Endothelial cell of umbilical vein (primary cell): ENCODE measurements at regions of chr5 and their contacts with region 1.

Region 1: GRCh38 chr5:10452768-10453331 is 11.2 kb downstream of the ROPN1L start:
- DNase-seq: peak; percentile 87
- H3K4me3 ChIP-seq: no peak overlapping the region
- H3K27ac ChIP-seq: no peak overlapping the region
- H3K4me1 ChIP-seq: peaks cover 10% of the 10 kb centered on the region
- H3K27me3 ChIP-seq: no peaks in the 10 kb centered on the region
- CTCF ChIP-seq: peak; percentile 56 to 67
- POLR2A ChIP-seq: no peak

Region 2: GRCh38 chr5:9869616-9870288 is 583.1 kb before region 1 on chr5:
- CTCF ChIA-PET with region 1: no interaction called
- POLR2A ChIA-PET with region 1: no interaction called
- dilution Hi-C with region 1: no loop called
- intact Hi-C with region 1: no loop called
- DNase-seq: no peak
- H3K4me3 ChIP-seq: no peak overlapping the region
- H3K27ac ChIP-seq: no peak overlapping the region
- H3K4me1 ChIP-seq: no peaks in the 10 kb centered on the region
- H3K27me3 ChIP-seq: no peaks in the 10 kb centered on the region
- CTCF ChIP-seq: no peak
- POLR2A ChIP-seq: no peak

Region 3: GRCh38 chr5:10552183-10553143 is 99.6 kb after region 1 on chr5:
- CTCF ChIA-PET with region 1: interaction called, 10 read pairs
- POLR2A ChIA-PET with region 1: no interaction called
- dilution Hi-C with region 1: no loop called
- intact Hi-C with region 1: no loop called
- DNase-seq: peak; percentile 44
- H3K4me3 ChIP-seq: no peak overlapping the region
- H3K27ac ChIP-seq: peak overlapping the region; percentile 87
- H3K4me1 ChIP-seq: peaks cover 33% of the 10 kb centered on the region
- H3K27me3 ChIP-seq: no peaks in the 10 kb centered on the region
- CTCF ChIP-seq: no peak
- POLR2A ChIP-seq: no peak

Region 4: DNA sequence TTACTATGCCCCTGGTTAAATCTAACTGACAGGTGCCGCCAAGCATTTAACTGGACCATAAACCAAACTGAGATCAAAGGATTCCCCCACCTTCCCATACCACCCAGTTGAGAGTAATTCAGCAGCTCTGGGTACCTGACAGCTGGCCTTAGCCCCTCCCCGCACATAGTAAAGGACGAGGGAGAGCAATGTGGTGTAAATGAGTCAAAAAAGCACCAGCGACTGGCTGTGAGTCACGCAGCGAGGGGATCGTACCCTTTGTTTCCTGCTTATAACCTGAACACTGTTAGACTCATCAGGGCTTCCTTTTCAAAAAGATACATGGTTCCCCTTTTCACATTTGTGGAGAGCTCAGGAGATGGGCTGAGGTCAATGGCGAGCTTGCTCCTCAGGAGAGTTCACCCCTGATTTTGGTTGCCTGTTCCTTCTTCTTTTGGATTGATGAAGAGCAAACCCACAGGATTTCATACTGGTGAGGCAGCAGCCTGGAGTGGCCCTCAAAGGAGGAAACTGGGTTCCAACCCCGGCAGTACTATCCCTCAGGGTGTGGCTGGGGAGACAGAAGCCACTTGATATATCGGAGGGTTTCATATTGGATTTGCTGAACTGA is 182.5 kb after region 1 on chr5:
- CTCF ChIA-PET with region 1: interaction called, 283 read pairs
- POLR2A ChIA-PET with region 1: no interaction called
- dilution Hi-C with region 1: no loop called
- intact Hi-C with region 1: no loop called
- DNase-seq: peak; percentile 64
- H3K4me3 ChIP-seq: no peak overlapping the region
- H3K27ac ChIP-seq: no peak overlapping the region
- H3K4me1 ChIP-seq: peaks cover 18% of the 10 kb centered on the region
- H3K27me3 ChIP-seq: no peaks in the 10 kb centered on the region
- CTCF ChIP-seq: no peak
- POLR2A ChIP-seq: no peak

Region 5: GRCh38 chr5:10689391-10690081 is 236.7 kb after region 1 on chr5:
- CTCF ChIA-PET with region 1: interaction called, 14 read pairs
- POLR2A ChIA-PET with region 1: no interaction called
- dilution Hi-C with region 1: no loop called
- intact Hi-C with region 1: loop called (anchors 1 kb)
- DNase-seq: peak; percentile 35
- H3K4me3 ChIP-seq: no peak overlapping the region
- H3K27ac ChIP-seq: no peak overlapping the region
- H3K4me1 ChIP-seq: no peaks in the 10 kb centered on the region
- H3K27me3 ChIP-seq: no peaks in the 10 kb centered on the region
- CTCF ChIP-seq: peak; percentile 14 to 50
- POLR2A ChIP-seq: no peak

Region 6: GRCh38 chr5:10856683-10857337 is 404.0 kb after region 1 on chr5:
- CTCF ChIA-PET with region 1: interaction called, 4 read pairs
- POLR2A ChIA-PET with region 1: no interaction called
- dilution Hi-C with region 1: no loop called
- intact Hi-C with region 1: loop called (anchors 5 kb)
- DNase-seq: peak; percentile 30
- H3K4me3 ChIP-seq: no peak overlapping the region
- H3K27ac ChIP-seq: no peak overlapping the region
- H3K4me1 ChIP-seq: no peaks in the 10 kb centered on the region
- H3K27me3 ChIP-seq: peaks cover 8 to 14% of the 10 kb centered on the region in 2 experiments
- CTCF ChIP-seq: peak; percentile 88 to 94
- POLR2A ChIP-seq: no peak